ENCODE measurements at regions of chr21 and their contacts with region 1.

Region 1: DNA sequence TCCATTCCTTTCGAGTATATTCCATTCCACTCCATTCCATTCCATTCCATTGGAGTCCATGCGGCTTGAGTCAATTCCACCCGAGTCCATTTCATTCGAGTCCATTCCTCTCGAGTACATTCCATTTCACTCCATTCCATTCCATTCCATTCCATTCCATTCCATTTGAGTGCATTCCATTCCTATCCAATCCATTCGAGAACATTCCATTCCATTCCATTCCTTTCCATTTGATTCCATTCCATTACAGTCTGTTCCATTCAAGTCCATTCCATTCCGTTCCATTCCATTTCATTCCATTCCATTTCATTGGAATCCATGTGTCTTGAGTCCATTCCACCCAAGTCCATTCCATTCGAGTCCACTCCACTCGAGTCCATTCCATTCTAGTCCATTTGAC is 2570.0 kb upstream of the TPTE start:
- DNase-seq: no peak
- H3K4me3 ChIP-seq: no peak overlapping the region
- H3K27ac ChIP-seq: no peak overlapping the region
- H3K4me1 ChIP-seq: no peaks in the 10 kb centered on the region
- H3K27me3 ChIP-seq: no peaks in the 10 kb centered on the region
- CTCF ChIP-seq: no peak
- EP300 ChIP-seq: no peak
- POLR2A ChIP-seq: no peak

Region 2: DNA sequence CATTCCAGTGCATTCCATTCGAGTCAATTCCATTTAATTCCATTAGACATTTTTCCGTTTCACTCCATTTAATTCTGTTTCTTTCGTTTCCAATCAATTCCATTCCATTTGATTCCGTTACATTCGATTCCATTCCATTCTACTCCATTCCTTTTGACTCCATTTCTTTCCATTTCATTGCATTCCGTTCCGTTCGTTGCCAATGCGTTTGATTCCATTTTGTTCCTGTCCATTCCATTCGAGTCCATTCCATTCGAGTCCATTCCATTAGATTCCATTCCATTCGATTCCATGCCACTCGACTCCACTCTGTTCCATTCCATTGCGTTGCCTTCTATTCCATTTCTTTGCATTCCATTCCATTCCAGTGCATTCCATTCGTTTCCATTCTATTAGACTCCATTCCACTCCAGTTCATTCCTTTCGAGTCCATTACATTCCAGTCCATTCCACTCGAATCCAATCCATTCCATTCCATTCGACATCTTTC is 17.5 kb before region 1 on chr21:
- intact Hi-C with region 1: loop called in 1 of 4 experiments (anchors 1 kb)
- DNase-seq: no peak
- H3K4me3 ChIP-seq: no peak overlapping the region
- H3K27ac ChIP-seq: no peak overlapping the region
- H3K4me1 ChIP-seq: no peaks in the 10 kb centered on the region
- H3K27me3 ChIP-seq: no peaks in the 10 kb centered on the region
- CTCF ChIP-seq: no peak
- EP300 ChIP-seq: no peak
- POLR2A ChIP-seq: no peak

Measured in ovary (tissue), 10 donors.